Breast epithelium (tissue), 4 donors: ENCODE measurements at regions of chr12 and their contacts with region 1.

Region 1: DNA sequence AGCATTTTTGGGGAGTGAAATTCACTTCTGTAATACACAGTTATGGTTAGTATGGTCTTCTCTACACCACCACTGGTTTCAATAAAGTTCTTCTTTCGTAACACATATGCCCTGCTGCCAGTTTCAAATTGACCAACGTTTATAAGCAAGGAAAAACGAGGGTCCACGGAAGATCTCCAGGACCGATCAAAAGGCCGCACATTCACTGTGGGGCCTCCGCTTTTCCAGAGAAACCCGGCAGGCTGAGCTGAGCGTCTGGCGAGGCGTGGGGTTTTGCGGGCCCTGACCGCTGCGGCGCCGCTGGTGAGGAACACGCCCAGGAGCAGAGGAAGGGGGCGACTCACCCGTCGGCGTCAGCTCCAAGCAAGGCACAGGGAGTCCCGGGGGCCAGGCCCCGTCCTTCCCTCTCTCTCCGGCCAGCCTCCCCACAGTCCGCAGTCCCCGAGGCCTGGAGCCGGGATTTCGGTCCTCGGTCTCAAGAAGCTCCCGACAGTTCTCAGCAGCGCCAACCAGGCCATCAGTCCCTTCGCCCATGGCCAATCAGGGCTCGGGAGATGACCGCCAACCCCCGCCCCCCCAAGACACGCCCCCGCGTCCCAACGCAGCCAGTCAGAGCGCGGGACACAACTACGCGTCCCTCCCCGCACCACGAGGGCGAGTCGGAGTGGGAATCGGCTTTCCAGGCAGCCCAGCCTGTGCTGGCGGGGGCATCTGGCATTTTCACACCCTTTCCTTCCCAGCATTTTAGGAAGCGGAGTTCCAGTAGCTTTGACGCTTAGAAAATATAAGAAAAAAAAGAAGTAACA is at the start of gene MTERF2:
- DNase-seq: peak; percentile 92 to 93
- H3K4me3 ChIP-seq: peak within 1 kb of the TSS; percentile 66 to 89 (median 69)
- H3K27ac ChIP-seq: peak within 1 kb of the TSS; percentile 95 to 98
- H3K4me1 ChIP-seq: peaks cover 5 to 17% of the 10 kb centered on the region in 2 donors
- H3K27me3 ChIP-seq: no peaks in the 10 kb centered on the region
- CTCF ChIP-seq: no peak
- POLR2A ChIP-seq: peak; percentile 48
- total RNA-seq, gene MTERF2: 13.6 to 32.8 (median 18.0) TPM

Region 2: GRCh38 chr12:107093417-107094182 is 106.8 kb after region 1 on chr12 and contains the start of gene CRY1:
- intact Hi-C with region 1: loop called (anchors 10 kb)
- DNase-seq: peak; percentile 94
- H3K4me3 ChIP-seq: peak within 1 kb of the TSS; percentile 71 to 93 (median 80)
- H3K27ac ChIP-seq: peak within 1 kb of the TSS; percentile 96 to 99
- H3K4me1 ChIP-seq: no peaks in the 10 kb centered on the region
- H3K27me3 ChIP-seq: no peaks in the 10 kb centered on the region
- CTCF ChIP-seq: peak in 1 of 3 donors; percentile 21
- POLR2A ChIP-seq: peak; percentile 81
- total RNA-seq, gene CRY1: 24.0 to 81.5 (median 47.5) TPM